Activated CD8-positive, alpha-beta memory T cell treated with anti-CD3 and anti-CD28 coated beads, Interleukin-2, amount 10 ng/mL, durations not matched to agents 7 days and 5 days (primary cell): ENCODE measurements at regions of chr17 and their contacts with region 1.

Region 1: GRCh38 chr17:80195731-80196529 is 24.2 kb downstream of the SGSH start:
- DNase-seq: peak; percentile 60
- ATAC-seq: peak; percentile 64
- H3K4me3 Mint-ChIP-seq: no peak overlapping the region
- H3K27ac Mint-ChIP-seq: no peak overlapping the region
- H3K4me1 Mint-ChIP-seq: no peaks in the 10 kb centered on the region
- H3K27me3 Mint-ChIP-seq: peaks cover 20% of the 10 kb centered on the region

Region 2: GRCh38 chr17:80219013-80219762 is 23.3 kb after region 1 on chr17:
- CTCF ChIA-PET with region 1: interaction called, 14 read pairs
- DNase-seq: peak; percentile 96
- ATAC-seq: peak; percentile 88
- H3K4me3 Mint-ChIP-seq: peak overlapping the region; percentile 83
- H3K27ac Mint-ChIP-seq: peak overlapping the region; percentile 88
- H3K4me1 Mint-ChIP-seq: peaks cover 19% of the 10 kb centered on the region
- H3K27me3 Mint-ChIP-seq: peaks cover 4% of the 10 kb centered on the region

Region 3: GRCh38 chr17:80254396-80255251 is 58.7 kb after region 1 on chr17:
- CTCF ChIA-PET with region 1: interaction called, 50 read pairs
- DNase-seq: peak; percentile 90
- ATAC-seq: peak; percentile 72
- H3K4me3 Mint-ChIP-seq: peak overlapping the region; percentile 65
- H3K27ac Mint-ChIP-seq: peak overlapping the region; percentile 98
- H3K4me1 Mint-ChIP-seq: peaks cover 76% of the 10 kb centered on the region
- H3K27me3 Mint-ChIP-seq: no peaks in the 10 kb centered on the region

Region 4: GRCh38 chr17:80265205-80266068 is 69.5 kb after region 1 on chr17:
- CTCF ChIA-PET with region 1: interaction called, 11 read pairs
- DNase-seq: peak; percentile 95
- ATAC-seq: peak; percentile 40
- H3K4me3 Mint-ChIP-seq: no peak overlapping the region
- H3K27ac Mint-ChIP-seq: peak overlapping the region; percentile 91
- H3K4me1 Mint-ChIP-seq: peaks cover 36% of the 10 kb centered on the region
- H3K27me3 Mint-ChIP-seq: no peaks in the 10 kb centered on the region

Region 5: GRCh38 chr17:80316927-80317702 is 121.2 kb after region 1 on chr17:
- CTCF ChIA-PET with region 1: no interaction called
- DNase-seq: no peak
- ATAC-seq: no peak
- H3K4me3 Mint-ChIP-seq: no peak overlapping the region
- H3K27ac Mint-ChIP-seq: no peak overlapping the region
- H3K4me1 Mint-ChIP-seq: peaks cover 16% of the 10 kb centered on the region
- H3K27me3 Mint-ChIP-seq: no peaks in the 10 kb centered on the region